ENCODE measurements at regions of chr7 and their contacts with region 1.

Region 1: GRCh38 chr7:106080300-106080987 is 31.7 kb downstream of the SYPL1 start:
- DNase-seq: no peak
- H3K4me3 ChIP-seq: no peak overlapping the region
- H3K27ac ChIP-seq: no peak overlapping the region
- H3K4me1 ChIP-seq: peaks cover 84% of the 10 kb centered on the region
- CTCF ChIP-seq: no peak

Region 2: GRCh38 chr7:105589356-105590077 is 490.9 kb before region 1 on chr7:
- CTCF ChIA-PET with region 1: no interaction called
- POLR2A ChIA-PET with region 1: no interaction called
- intact Hi-C with region 1: no loop called
- DNase-seq: peak; percentile 78
- H3K4me3 ChIP-seq: no peak overlapping the region
- H3K27ac ChIP-seq: no peak overlapping the region
- H3K4me1 ChIP-seq: peaks cover 6% of the 10 kb centered on the region
- CTCF ChIP-seq: peak; percentile 90

Region 3: GRCh38 chr7:106064316-106064715 is 16.1 kb before region 1 on chr7:
- CTCF ChIA-PET with region 1: interaction called, 3 read pairs
- POLR2A ChIA-PET with region 1: interaction called, 308 read pairs
- intact Hi-C with region 1: no loop called
- DNase-seq: peak; percentile 75
- H3K4me3 ChIP-seq: no peak overlapping the region
- H3K27ac ChIP-seq: peak overlapping the region; percentile 98
- H3K4me1 ChIP-seq: peaks cover 100% of the 10 kb centered on the region
- CTCF ChIP-seq: peak; percentile 34